A549 (cell line): ENCODE measurements at regions of chr17 and their contacts with region 1.

Region 1: DNA sequence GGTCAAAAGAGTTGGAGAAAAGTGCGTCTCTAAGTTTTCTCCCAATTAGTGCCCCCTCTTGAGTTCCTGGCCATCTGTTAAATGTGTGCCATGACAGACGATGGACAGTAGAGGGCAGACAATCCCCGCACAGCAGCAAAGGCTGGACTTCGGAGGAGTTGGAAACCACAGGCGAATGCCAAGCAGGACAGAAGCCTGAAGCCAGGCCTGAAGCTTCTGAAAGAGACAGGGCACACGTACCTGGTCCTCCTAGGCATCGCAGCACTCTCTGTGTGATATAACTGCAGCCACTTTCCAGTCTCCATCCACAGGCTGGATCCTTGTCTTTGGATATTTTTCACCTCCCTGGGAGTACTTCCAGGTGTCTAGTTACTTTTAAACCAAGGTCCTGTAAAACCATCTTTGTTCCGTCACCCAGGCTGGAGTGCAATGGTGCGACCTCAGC is 14.5 kb downstream of the C17orf100 start:
- DNase-seq: peak; percentile 86 to 90
- ATAC-seq: peak; percentile 87 to 94
- H3K4me3 ChIP-seq: no peak overlapping the region
- H3K27ac ChIP-seq: no peak overlapping the region
- H3K4me1 ChIP-seq: peaks cover 4% of the 10 kb centered on the region; the same call in 1 of the 3 replicates
- CTCF ChIP-seq: peak; percentile 97
- EP300 ChIP-seq: no peak
- POLR2A ChIP-seq: no peak
- RAD21 ChIP-seq: peak; percentile 97 to 99

Region 2: GRCh38 chr17:6677158-6677831 is 11.2 kb after region 1 on chr17:
- CTCF ChIA-PET with region 1: interaction called, 62 read pairs
- POLR2A ChIA-PET with region 1: interaction called, 7 read pairs
- DNase-seq: no peak
- ATAC-seq: peak in 1 of 2 experiments; percentile 22; a peak in 1 of 6 replicates
- H3K4me3 ChIP-seq: no peak overlapping the region
- H3K27ac ChIP-seq: no peak overlapping the region
- H3K4me1 ChIP-seq: peaks cover 10% of the 10 kb centered on the region; the same call in 2 of the 3 replicates
- CTCF ChIP-seq: no peak
- EP300 ChIP-seq: no peak
- POLR2A ChIP-seq: no peak
- RAD21 ChIP-seq: no peak

Region 3: DNA sequence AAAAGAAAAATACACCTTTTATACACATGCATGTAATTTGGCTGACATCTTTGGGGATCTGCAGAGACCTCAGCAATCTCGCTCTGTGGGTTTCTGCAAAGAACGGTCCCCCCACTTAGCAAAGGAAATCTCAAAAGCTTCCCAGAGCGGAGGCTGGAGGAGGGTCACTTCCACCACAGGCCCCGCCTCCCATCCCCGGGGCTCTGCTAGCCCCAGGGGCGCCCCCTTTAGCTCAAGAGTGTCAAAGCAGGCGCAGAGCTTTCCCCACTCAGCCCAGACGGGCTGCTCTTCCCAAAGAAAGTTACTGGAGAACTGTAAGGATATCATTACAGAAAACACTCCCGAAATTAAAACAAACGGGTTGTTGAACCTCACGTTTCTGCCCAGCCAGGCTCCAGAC is 35.6 kb after region 1 on chr17:
- CTCF ChIA-PET with region 1: interaction called, 56 read pairs
- POLR2A ChIA-PET with region 1: no interaction called
- DNase-seq: peak; percentile 50 to 72
- ATAC-seq: peak; percentile 73 to 94; a peak in 5 of 6 replicates
- H3K4me3 ChIP-seq: no peak overlapping the region
- H3K27ac ChIP-seq: no peak overlapping the region
- H3K4me1 ChIP-seq: no peaks in the 10 kb centered on the region
- CTCF ChIP-seq: peak; percentile 32; the same call in 2 of the 3 replicates
- EP300 ChIP-seq: no peak
- POLR2A ChIP-seq: no peak
- RAD21 ChIP-seq: peak in 1 of 2 experiments; percentile 22; a peak in 1 of 5 replicates

Region 4: DNA sequence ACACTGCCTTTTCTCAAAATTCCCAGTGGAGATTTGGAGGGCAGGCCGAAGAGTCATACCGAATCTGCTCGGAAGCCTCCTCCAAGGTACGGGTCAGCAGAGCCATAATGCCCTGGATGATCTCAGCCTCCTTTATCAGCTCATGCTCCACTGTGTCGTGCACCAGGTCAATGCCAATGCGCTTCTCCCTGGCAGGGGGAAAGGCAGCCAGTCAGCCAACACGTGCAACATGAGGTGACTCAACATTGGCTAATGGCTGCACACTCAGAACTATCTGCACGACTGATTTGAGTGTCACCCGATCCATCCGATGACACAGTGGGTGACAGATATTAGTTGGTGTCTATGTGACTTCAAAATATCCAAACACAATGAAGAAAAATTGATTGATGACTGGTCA is 149.7 kb after region 1 on chr17:
- CTCF ChIA-PET with region 1: interaction called, 11 read pairs
- POLR2A ChIA-PET with region 1: no interaction called
- DNase-seq: no peak
- ATAC-seq: no peak
- H3K4me3 ChIP-seq: no peak overlapping the region
- H3K27ac ChIP-seq: no peak overlapping the region
- H3K4me1 ChIP-seq: no peaks in the 10 kb centered on the region
- CTCF ChIP-seq: no peak
- EP300 ChIP-seq: no peak
- POLR2A ChIP-seq: no peak
- RAD21 ChIP-seq: no peak

Region 5: GRCh38 chr17:6872137-6872808 is 206.2 kb after region 1 on chr17:
- CTCF ChIA-PET with region 1: interaction called, 12 read pairs
- POLR2A ChIA-PET with region 1: no interaction called
- DNase-seq: peak; percentile 90 to 98
- ATAC-seq: peak; percentile 98 to 100
- H3K4me3 ChIP-seq: no peak overlapping the region
- H3K27ac ChIP-seq: peak overlapping the region; percentile 85
- H3K4me1 ChIP-seq: peaks cover 58% of the 10 kb centered on the region
- CTCF ChIP-seq: no peak
- EP300 ChIP-seq: peak; percentile 90; a peak in 3 of 5 replicates
- POLR2A ChIP-seq: no peak
- RAD21 ChIP-seq: peak; percentile 27 to 41; a peak in 2 of 5 replicates

Region 6: DNA sequence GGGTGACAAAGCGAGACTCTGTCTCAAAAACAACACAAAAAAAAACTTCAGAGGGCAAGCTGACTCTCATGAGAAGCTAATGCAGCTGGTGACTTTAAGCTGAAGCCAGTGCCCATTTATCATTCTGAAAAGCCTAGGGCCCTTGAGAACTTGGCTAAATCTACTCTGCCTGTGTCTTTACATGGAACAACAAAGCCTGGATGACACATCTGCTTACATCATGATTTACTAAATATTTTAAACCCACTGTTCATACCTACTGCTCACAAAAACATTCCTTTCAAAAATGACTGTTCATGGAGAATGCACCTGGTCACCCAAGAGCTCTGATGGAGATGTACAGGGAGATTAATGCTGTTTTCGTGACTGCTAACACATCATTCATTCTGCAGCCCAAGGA is 323.7 kb after region 1 on chr17:
- CTCF ChIA-PET with region 1: interaction called, 13 read pairs
- POLR2A ChIA-PET with region 1: no interaction called
- DNase-seq: no peak
- ATAC-seq: no peak
- H3K4me3 ChIP-seq: no peak overlapping the region
- H3K27ac ChIP-seq: no peak overlapping the region
- H3K4me1 ChIP-seq: no peaks in the 10 kb centered on the region
- CTCF ChIP-seq: no peak
- EP300 ChIP-seq: no peak
- POLR2A ChIP-seq: no peak
- RAD21 ChIP-seq: no peak

Region 7: DNA sequence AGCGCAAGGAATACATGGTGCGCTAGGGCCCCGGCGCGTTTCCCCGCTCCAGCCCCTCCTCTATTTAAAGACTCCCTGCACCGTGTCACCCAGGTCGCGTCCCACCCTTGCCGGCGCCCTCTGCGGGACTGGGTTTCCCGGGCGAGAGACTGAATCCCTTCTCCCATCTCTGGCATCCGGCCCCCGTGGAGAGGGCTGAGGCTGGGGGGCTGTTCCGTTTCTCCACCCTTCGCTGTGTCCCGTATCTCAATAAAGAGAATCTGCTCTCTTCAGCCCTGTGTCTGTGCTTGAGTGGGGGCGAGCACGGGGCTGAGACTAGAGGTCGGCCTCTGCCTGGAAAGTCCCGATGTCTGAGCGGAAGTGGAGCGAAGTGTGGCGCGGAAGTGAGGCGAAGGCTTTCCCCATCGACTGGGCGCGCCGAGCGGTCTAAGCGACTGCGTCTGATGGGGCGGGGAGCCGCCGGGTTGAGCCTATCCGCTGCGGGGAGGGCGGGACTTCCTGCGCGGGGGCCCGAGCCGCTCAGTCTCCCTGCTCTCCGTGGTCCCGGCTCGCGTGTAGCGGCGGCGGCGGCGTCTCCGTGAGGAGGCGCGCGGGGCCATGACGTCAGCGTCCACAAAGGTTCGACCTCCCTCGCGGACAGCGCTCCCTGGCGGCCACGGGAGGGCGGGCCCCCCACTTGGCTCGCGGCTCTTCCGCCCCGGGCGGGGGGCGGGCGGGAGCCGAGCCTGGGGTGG is 348.3 kb after region 1 on chr17:
- CTCF ChIA-PET with region 1: interaction called, 293 read pairs
- POLR2A ChIA-PET with region 1: no interaction called
- DNase-seq: peak; percentile 96 to 98
- ATAC-seq: peak; percentile 83 to 92
- H3K4me3 ChIP-seq: peak overlapping the region; percentile 81
- H3K27ac ChIP-seq: peak overlapping the region; percentile 90 to 99
- H3K4me1 ChIP-seq: peaks cover 25% of the 10 kb centered on the region
- CTCF ChIP-seq: peak; percentile 87
- EP300 ChIP-seq: no peak
- POLR2A ChIP-seq: peak; percentile 89
- RAD21 ChIP-seq: peak in 1 of 2 experiments; percentile 61; a peak in 3 of 5 replicates